ENCODE measurements at regions of chr4 and their contacts with region 1.

Region 1: GRCh38 chr4:81069706-81070331 is 39.3 kb downstream of the BMP3 start:
- DNase-seq: peak; percentile 68
- ATAC-seq: peak; percentile 84
- H3K4me3 Mint-ChIP-seq: no peak overlapping the region
- H3K27ac Mint-ChIP-seq: no peak overlapping the region
- H3K4me1 Mint-ChIP-seq: no peaks in the 10 kb centered on the region
- H3K27me3 Mint-ChIP-seq: peaks cover 14% of the 10 kb centered on the region

Region 2: GRCh38 chr4:81084029-81084428 is 14.2 kb after region 1 on chr4:
- CTCF ChIA-PET with region 1: interaction called, 11 read pairs
- POLR2A ChIA-PET with region 1: no interaction called
- DNase-seq: no peak
- ATAC-seq: no peak
- H3K4me3 Mint-ChIP-seq: no peak overlapping the region
- H3K27ac Mint-ChIP-seq: no peak overlapping the region
- H3K4me1 Mint-ChIP-seq: no peaks in the 10 kb centered on the region
- H3K27me3 Mint-ChIP-seq: no peaks in the 10 kb centered on the region

Region 3: DNA sequence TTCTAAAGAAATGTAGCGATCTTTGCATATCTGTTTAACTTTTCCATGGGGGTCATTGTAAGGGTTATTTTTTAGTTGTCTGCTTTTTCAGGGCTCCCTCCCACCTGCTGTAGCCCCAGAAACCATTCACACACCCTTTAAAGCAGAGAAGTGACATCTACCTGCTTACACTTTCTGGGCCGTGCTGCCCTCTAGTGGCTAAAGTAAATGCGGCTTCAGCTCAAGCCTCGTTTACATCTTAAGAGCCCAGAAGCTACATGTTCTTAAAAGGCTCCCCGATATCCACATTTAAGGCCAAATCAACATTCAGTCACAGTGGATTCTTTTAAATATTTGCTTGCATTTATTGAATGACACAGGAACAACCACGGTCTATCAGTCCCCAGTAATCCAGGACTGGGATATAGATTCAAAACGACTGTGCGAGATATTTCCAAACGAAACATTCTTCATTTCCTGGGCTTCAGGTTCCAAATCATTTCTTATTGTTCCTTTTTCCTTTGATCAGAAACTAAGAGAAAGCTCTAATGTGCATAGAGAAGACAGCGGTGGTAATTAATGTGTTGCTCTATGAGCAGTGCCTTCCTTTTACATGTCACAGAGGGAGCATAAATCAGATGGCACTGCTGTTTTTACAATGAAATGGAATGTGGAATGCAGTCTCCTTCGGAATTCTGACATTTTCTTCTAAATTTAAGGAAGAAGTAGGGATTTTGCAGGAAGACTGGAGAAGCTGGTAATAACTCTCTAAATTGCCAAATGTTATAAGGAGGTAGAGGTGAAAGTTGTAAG is 282.0 kb after region 1 on chr4:
- CTCF ChIA-PET with region 1: interaction called, 48 read pairs
- POLR2A ChIA-PET with region 1: no interaction called
- DNase-seq: peak; percentile 77
- ATAC-seq: peak; percentile 79
- H3K4me3 Mint-ChIP-seq: no peak overlapping the region
- H3K27ac Mint-ChIP-seq: no peak overlapping the region
- H3K4me1 Mint-ChIP-seq: no peaks in the 10 kb centered on the region
- H3K27me3 Mint-ChIP-seq: peaks cover 5% of the 10 kb centered on the region

Measured in activated CD8-positive, alpha-beta T cell treated with anti-CD3 and anti-CD28 coated beads, Interleukin-2, amount 10 ng/mL, durations not matched to agents 7 days and 5 days (primary cell).